Calu3 (cell line): ENCODE measurements at regions of chr5 and their contacts with region 1.

Region 1: DNA sequence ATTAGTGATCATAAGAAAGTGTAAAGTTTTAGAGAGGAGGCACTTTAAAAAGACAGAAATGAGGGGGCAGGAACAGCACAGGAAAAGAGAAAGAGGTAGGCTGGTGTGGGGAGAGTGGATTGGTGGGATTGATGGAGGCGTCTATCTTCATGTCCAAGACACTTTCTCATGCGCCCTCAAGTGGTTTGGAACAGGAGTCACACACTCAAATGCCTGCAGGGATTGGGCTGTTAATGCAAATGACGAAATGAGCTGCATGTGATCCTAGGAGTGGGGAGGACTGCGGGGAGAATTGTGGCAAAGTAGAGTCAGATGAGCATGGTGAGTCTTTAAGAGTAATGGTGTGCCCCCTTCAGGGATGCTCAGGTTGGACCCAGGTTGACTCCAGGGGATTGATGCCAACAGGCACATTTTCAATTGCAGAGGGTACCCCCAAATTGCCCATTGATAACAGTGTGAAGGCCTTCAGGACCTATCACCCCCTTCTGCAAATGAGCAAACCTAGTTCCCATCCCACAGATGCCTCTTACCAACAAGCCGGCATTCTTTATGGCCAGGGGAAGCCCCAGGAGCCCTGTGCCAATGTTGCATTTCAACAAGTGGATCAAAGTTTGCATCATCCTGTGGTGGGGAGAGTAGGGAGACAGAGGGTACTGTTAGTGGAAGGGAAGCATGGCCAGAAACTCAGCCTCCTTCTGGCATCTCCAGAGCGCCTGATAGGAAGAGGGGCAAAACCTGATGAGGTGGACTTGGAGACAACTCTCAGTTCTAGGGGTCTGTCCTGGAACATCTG is 5.3 kb downstream of the SLC36A3 start:
- DNase-seq: peak; percentile 51
- H3K4me3 Mint-ChIP-seq: no peak overlapping the region
- H3K27ac Mint-ChIP-seq: no peak overlapping the region
- H3K4me1 Mint-ChIP-seq: peaks cover 27% of the 10 kb centered on the region
- H3K27me3 Mint-ChIP-seq: peaks cover 78% of the 10 kb centered on the region
- CTCF ChIP-seq: no peak

Region 2: GRCh38 chr5:151002250-151002649 is 296.0 kb before region 1 on chr5:
- CTCF ChIA-PET with region 1: interaction called, 3 read pairs
- intact Hi-C with region 1: loop called (anchors 1 kb)
- DNase-seq: peak; percentile 52
- H3K4me3 Mint-ChIP-seq: no peak overlapping the region
- H3K27ac Mint-ChIP-seq: no peak overlapping the region
- H3K4me1 Mint-ChIP-seq: no peaks in the 10 kb centered on the region
- H3K27me3 Mint-ChIP-seq: peaks cover 26% of the 10 kb centered on the region
- CTCF ChIP-seq: no peak

Region 3: GRCh38 chr5:151126199-151126645 is 172.0 kb before region 1 on chr5:
- CTCF ChIA-PET with region 1: interaction called, 6 read pairs
- intact Hi-C with region 1: loop called (anchors 5 kb)
- DNase-seq: peak; percentile 86
- H3K4me3 Mint-ChIP-seq: no peak overlapping the region
- H3K27ac Mint-ChIP-seq: no peak overlapping the region
- H3K4me1 Mint-ChIP-seq: peaks cover 11% of the 10 kb centered on the region
- H3K27me3 Mint-ChIP-seq: no peaks in the 10 kb centered on the region
- CTCF ChIP-seq: peak; percentile 91

Region 4: DNA sequence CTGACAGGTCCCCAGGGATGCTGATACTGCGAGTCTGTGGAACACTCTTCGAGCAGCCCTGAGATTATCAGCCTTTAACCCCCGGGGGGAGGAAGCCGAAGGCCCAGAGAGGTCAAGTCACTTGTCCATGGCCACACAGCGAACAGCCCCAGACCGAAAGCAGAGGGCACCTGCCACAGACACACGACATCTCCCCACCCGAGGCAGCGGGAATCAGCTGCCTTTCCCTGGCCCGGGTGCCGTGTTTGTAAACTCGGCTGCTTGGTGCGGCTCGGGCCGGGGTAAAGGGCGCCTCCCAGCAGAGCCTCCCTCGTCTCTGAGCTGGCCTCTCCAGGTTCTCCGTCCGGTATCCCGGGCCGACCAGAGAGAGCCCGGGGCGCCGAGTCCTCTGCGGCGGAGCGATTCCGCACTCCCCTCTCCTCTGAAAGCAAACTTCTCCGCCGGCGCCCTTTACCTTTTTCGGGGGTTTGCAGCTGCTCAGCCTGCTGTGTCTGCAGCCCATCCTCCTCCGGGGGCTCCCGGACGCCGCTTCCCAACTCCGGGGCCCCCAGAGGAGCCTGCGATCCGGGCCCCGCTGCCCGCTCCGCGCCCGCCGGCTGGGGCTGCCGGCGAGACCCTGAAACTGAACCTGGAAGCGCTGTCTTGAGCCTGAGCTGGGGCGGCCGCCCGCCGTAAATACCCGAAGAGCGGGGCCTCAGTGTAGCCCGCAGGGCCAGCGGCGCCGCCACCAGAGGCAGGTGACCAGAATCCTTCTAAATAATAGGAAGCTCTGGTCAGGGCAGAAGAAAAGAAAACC is 74.6 kb before region 1 on chr5 and contains the start of gene CCDC69:
- CTCF ChIA-PET with region 1: no interaction called
- intact Hi-C with region 1: loop called (anchors 5 kb)
- DNase-seq: peak; percentile 79
- H3K4me3 Mint-ChIP-seq: peak within 1 kb of the TSS; percentile 77
- H3K27ac Mint-ChIP-seq: no peak within 1 kb of the TSS
- H3K4me1 Mint-ChIP-seq: no peaks in the 10 kb centered on the region
- H3K27me3 Mint-ChIP-seq: peaks cover 26% of the 10 kb centered on the region
- CTCF ChIP-seq: no peak
- total RNA-seq, gene CCDC69: 0.69 and 1.0 TPM in 2 replicates